CD4-positive, alpha-beta memory T cell (primary cell): ENCODE measurements at regions of chr12 and their contacts with region 1.

Region 1: GRCh38 chr12:104108755-104109445 is 29.1 kb downstream of the NFYB start:
- DNase-seq: peak; percentile 76 to 85 (median 77)
- H3K4me3 ChIP-seq: no peak overlapping the region
- H3K4me3 Mint-ChIP-seq: no peak overlapping the region
- H3K27ac ChIP-seq: no peak overlapping the region
- H3K27ac Mint-ChIP-seq: peak overlapping the region in 3 of 7 donors; percentile 47 to 80 (median 49)
- H3K4me1 ChIP-seq: peaks cover 6% of the 10 kb centered on the region
- H3K4me1 Mint-ChIP-seq: peaks cover 10 to 17% (median 12%) of the 10 kb centered on the region in 4 donors
- H3K27me3 ChIP-seq: no peaks in the 10 kb centered on the region
- H3K27me3 Mint-ChIP-seq: no peaks in the 10 kb centered on the region

Region 2: GRCh38 chr12:103877934-103878510 is 230.9 kb before region 1 on chr12:
- CTCF ChIA-PET with region 1: interaction called, 26 read pairs
- POLR2A ChIA-PET with region 1: no interaction called
- intact Hi-C with region 1: loop called (anchors 1 kb)
- DNase-seq: peak; percentile 51 to 61 (median 60)
- H3K4me3 ChIP-seq: no peak overlapping the region
- H3K4me3 Mint-ChIP-seq: peak overlapping the region in 3 of 8 donors; percentile 8 to 62 (median 20)
- H3K27ac ChIP-seq: no peak overlapping the region
- H3K27ac Mint-ChIP-seq: peak overlapping the region in 3 of 7 donors; percentile 23 to 77 (median 76)
- H3K4me1 ChIP-seq: peaks cover 7% of the 10 kb centered on the region
- H3K4me1 Mint-ChIP-seq: peaks cover 3 to 27% (median 14%) of the 10 kb centered on the region in 4 donors
- H3K27me3 ChIP-seq: no peaks in the 10 kb centered on the region
- H3K27me3 Mint-ChIP-seq: no peaks in the 10 kb centered on the region

Region 3: GRCh38 chr12:104057771-104058197 is 51.1 kb before region 1 on chr12:
- CTCF ChIA-PET with region 1: interaction called, 79 read pairs
- POLR2A ChIA-PET with region 1: interaction called, 13 read pairs
- intact Hi-C with region 1: loop called (anchors 1 kb)
- DNase-seq: peak in 4 of 5 donors; percentile 7 to 28 (median 22)
- H3K4me3 ChIP-seq: no peak overlapping the region
- H3K4me3 Mint-ChIP-seq: no peak overlapping the region
- H3K27ac ChIP-seq: no peak overlapping the region
- H3K27ac Mint-ChIP-seq: peak overlapping the region in 1 of 7 donors; percentile 27
- H3K4me1 ChIP-seq: no peaks in the 10 kb centered on the region
- H3K4me1 Mint-ChIP-seq: no peaks in the 10 kb centered on the region
- H3K27me3 ChIP-seq: peaks cover 9% of the 10 kb centered on the region
- H3K27me3 Mint-ChIP-seq: peaks cover 9 to 23% of the 10 kb centered on the region in 2 donors

Region 4: GRCh38 chr12:104090687-104091086 is 18.2 kb before region 1 on chr12:
- CTCF ChIA-PET with region 1: interaction called, 51 read pairs
- POLR2A ChIA-PET with region 1: interaction called, 3 read pairs
- intact Hi-C with region 1: no loop called
- DNase-seq: no peak
- H3K4me3 ChIP-seq: no peak overlapping the region
- H3K4me3 Mint-ChIP-seq: no peak overlapping the region
- H3K27ac ChIP-seq: no peak overlapping the region
- H3K27ac Mint-ChIP-seq: peak overlapping the region in 1 of 7 donors; percentile 27
- H3K4me1 ChIP-seq: no peaks in the 10 kb centered on the region
- H3K4me1 Mint-ChIP-seq: peaks cover 0 to 7% (median 4%) of the 10 kb centered on the region in 4 donors
- H3K27me3 ChIP-seq: no peaks in the 10 kb centered on the region
- H3K27me3 Mint-ChIP-seq: no peaks in the 10 kb centered on the region

Region 5: GRCh38 chr12:104126548-104126947 is 17.6 kb after region 1 on chr12:
- CTCF ChIA-PET with region 1: interaction called, 26 read pairs
- POLR2A ChIA-PET with region 1: interaction called, 3 read pairs
- intact Hi-C with region 1: no loop called
- DNase-seq: no peak
- H3K4me3 ChIP-seq: no peak overlapping the region
- H3K4me3 Mint-ChIP-seq: no peak overlapping the region
- H3K27ac ChIP-seq: no peak overlapping the region
- H3K27ac Mint-ChIP-seq: peak overlapping the region in 4 of 7 donors; percentile 8 to 86 (median 38)
- H3K4me1 ChIP-seq: peaks cover 6% of the 10 kb centered on the region
- H3K4me1 Mint-ChIP-seq: peaks cover 10 to 23% (median 12%) of the 10 kb centered on the region in 4 donors
- H3K27me3 ChIP-seq: no peaks in the 10 kb centered on the region
- H3K27me3 Mint-ChIP-seq: no peaks in the 10 kb centered on the region

Region 6: GRCh38 chr12:104154286-104154685 is 45.4 kb after region 1 on chr12:
- CTCF ChIA-PET with region 1: no interaction called
- POLR2A ChIA-PET with region 1: no interaction called
- intact Hi-C with region 1: no loop called
- DNase-seq: peak in 1 of 5 donors; percentile 8
- H3K4me3 ChIP-seq: no peak overlapping the region
- H3K4me3 Mint-ChIP-seq: peak overlapping the region; percentile 22 to 85 (median 74)
- H3K27ac ChIP-seq: no peak overlapping the region
- H3K27ac Mint-ChIP-seq: peak overlapping the region; percentile 3 to 92 (median 85)
- H3K4me1 ChIP-seq: peaks cover 16% of the 10 kb centered on the region
- H3K4me1 Mint-ChIP-seq: peaks cover 9 to 19% (median 11%) of the 10 kb centered on the region in 4 donors
- H3K27me3 ChIP-seq: no peaks in the 10 kb centered on the region
- H3K27me3 Mint-ChIP-seq: no peaks in the 10 kb centered on the region